Right ventricle myocardium inferior (tissue), 1 donor: ENCODE measurements at regions of chr20 and their contacts with region 1.

Region 1: DNA sequence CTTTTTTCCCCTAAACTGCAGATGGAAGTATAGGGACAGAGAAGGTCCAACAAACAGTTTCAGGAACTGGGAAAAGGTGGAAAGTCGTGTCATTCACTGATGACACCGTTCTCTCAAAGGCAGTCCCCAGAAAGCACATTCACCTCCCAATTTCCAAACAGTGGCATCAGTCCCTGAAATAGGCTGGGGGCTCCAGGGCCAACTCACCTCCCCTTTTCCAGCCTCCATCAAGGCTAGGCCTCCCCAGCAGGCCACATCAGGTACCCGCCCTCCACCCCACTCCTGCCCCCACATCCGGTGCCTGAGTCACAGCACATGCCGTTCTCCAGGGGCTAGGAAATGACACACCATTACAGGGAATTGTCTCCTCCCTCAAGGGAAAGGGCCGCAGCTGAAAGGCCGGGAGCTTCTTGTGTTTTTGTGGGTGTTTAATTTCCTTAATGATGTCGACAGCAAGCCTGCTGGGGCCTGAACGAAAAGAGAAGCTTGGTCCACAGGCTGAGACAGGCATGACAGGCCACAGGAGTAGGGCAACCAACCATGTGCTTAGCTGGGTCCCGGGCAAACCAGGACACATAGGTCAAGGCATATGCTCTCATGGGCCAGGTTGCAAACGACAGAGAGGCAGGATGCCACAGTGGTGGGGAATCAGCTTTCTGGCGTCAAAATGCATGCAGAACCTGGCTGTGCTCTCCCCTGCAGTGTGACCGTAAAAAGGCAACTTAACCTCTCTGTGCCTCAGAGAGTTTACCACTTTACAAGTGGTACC is 39.2 kb downstream of the ZMYND8 start:
- DNase-seq: peak; percentile 85
- ATAC-seq: peak; percentile 63

Region 2: GRCh38 chr20:47360297-47361056 is 43.2 kb after region 1 on chr20:
- intact Hi-C with region 1: loop called (anchors 1 kb)
- DNase-seq: peak; percentile 94
- ATAC-seq: peak; percentile 64